Activated CD4-positive, alpha-beta T cell treated with anti-CD3 and anti-CD28 coated beads, Interleukin-2, amount 10 ng/mL, durations not matched to agents 24 days and 14 days (primary cell): ENCODE measurements at regions of chr2 and their contacts with region 1.

Region 1: DNA sequence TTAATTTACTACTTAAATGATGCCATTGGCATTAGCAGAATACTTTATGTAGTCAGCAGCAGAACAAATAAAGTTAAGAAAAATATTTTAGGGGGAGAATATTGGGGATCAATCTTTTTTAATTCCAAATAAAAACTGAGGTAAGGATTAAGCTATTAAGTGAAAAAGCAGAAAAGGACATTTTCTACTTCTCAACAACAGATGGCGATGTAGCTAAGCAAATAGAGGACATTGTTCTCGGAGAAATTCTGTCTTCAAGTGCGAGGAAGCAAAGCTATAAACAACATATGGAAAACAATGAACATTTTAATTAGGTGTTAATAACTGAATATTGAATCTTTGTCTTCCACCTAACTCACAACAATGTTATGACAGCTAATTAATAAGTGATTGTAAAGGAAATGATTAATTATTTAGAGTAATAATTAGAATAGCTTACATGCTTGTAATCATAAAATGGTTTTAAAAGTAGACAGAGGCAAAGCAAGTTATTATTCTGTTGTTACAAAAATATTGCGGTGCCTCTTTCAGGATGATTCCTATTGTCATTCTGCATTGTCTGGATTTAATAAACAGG is 32.9 kb upstream of the CCDC93 start:
- DNase-seq: no peak
- H3K4me3 Mint-ChIP-seq: no peak overlapping the region
- H3K27ac Mint-ChIP-seq: no peak overlapping the region
- H3K4me1 Mint-ChIP-seq: peaks cover 2% of the 10 kb centered on the region
- H3K27me3 Mint-ChIP-seq: peaks cover 41% of the 10 kb centered on the region

Region 2: GRCh38 chr2:117771969-117772630 is 274.6 kb before region 1 on chr2:
- intact Hi-C with region 1: no loop called
- DNase-seq: no peak
- H3K4me3 Mint-ChIP-seq: no peak overlapping the region
- H3K27ac Mint-ChIP-seq: no peak overlapping the region
- H3K4me1 Mint-ChIP-seq: no peaks in the 10 kb centered on the region
- H3K27me3 Mint-ChIP-seq: no peaks in the 10 kb centered on the region

Region 3: GRCh38 chr2:118013724-118014491 is 32.8 kb before region 1 on chr2 and contains the start of gene CCDC93:
- intact Hi-C with region 1: no loop called
- DNase-seq: peak; percentile 97
- H3K4me3 Mint-ChIP-seq: peak within 1 kb of the TSS; percentile 96
- H3K27ac Mint-ChIP-seq: peak within 1 kb of the TSS; percentile 91
- H3K4me1 Mint-ChIP-seq: peaks cover 41% of the 10 kb centered on the region
- H3K27me3 Mint-ChIP-seq: no peaks in the 10 kb centered on the region
- total RNA-seq, gene CCDC93: 30.3 and 34.4 TPM in 2 replicates

Region 4: DNA sequence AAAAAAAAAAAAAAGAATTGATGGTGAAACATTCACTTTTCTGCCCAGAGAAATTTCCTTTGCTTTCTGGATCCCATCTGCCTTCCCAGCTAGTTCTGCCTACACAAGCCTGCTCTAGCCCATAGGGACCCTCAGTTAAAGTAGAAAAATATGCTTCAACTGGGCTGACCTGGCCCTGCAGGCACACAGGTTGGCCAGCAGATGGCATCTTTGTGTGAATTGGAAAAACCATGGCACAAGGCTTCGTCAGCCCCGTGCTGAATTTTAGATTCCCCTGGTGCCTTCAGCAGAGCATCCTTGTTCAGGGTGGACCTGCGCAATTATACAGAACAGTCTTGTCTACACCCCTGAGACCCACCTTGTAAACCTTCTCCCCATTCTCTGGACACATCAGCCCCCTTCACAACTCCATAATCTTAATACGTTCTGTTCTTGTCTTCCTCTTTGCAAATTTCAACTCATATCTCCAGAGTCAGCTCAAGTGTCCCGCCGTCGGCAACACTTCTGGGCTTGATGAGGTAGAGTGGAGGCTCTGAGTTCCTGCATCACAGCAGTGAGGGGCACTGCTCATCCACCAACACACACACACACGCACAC is 156.1 kb after region 1 on chr2:
- intact Hi-C with region 1: loop called (anchors 2 kb)
- DNase-seq: peak; percentile 86
- H3K4me3 Mint-ChIP-seq: peak overlapping the region; percentile 6
- H3K27ac Mint-ChIP-seq: no peak overlapping the region
- H3K4me1 Mint-ChIP-seq: peaks cover 8% of the 10 kb centered on the region
- H3K27me3 Mint-ChIP-seq: peaks cover 12% of the 10 kb centered on the region